GM23248 (cell line): ENCODE measurements at regions of chr3 and their contacts with region 1.

Region 1: DNA sequence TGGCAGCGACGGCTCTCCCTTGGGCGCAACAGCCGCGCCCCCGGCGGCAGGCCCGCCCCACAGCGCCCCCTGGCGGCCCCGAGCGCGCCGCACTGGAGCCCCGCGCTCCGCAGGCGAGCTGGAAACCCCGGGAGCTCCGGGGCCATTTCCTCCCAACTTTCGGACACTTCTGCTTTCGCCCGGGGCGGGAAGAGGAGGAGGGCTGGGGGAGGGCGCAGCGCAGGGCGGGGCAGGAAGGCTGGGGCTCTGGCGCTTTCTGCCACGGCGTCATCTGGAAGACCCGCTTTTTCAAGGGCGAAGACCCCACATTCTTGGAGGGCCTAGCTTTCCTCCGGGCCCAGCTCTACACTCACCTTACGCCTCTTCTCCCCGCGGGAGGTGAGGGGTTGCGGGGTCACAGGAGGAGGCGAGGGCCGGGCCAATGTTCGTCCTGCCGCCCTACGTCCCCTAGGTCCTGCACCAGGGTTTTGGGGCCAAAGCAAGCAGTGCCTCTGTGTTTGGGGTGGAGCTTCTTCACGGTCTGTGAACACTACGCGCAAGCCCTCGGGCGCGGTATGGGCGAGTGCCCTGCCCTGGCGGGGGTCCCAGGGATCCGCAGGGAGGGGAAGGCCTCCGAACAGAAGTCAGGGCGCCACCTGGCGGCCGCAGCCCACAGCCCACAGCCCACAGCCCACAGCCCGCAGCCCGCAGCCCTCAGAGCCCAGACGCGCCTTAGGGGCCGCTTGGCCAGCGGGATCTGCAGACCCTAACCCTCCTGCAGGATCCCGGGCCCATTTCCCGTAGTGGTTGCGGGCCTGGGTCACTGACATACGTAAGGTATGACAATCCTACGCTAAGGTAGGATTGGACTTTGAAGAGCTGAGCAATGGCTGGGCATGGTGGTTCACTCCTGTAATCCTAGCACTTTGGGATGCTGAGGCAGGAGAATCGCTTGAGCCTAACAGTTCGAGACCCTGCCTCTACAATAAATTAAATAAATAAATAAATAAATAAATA is 31.1 kb downstream of the FOXL2 start:
- DNase-seq: peak; percentile 95
- H3K4me3 ChIP-seq: peak overlapping the region; percentile 84
- H3K27ac ChIP-seq: peak overlapping the region; percentile 61
- H3K4me1 ChIP-seq: no peaks in the 10 kb centered on the region
- H3K27me3 ChIP-seq: no peaks in the 10 kb centered on the region

Region 2: DNA sequence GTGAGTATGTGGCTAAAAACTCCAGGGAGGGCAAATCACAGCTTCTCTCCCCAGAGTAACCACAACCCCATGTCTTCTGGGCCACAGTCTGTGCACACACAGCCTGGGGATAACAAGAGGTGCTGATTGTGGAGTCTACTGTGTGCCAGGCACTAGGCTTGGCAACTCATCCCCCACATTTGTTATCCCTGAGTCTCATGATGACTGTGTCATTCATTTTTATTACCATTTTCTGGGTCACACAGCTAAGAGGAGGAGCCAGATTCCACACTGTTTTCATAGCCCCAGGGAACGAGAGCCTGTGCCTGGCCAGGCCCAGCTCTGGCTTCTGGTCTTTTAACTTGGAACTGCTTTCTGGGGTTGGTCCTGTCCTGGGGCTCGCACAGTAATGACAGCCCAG is 446.9 kb before region 1 on chr3:
- in situ Hi-C with region 1: loop called (anchors 25 kb)
- DNase-seq: peak; percentile 56
- H3K4me3 ChIP-seq: no peak overlapping the region
- H3K27ac ChIP-seq: no peak overlapping the region
- H3K4me1 ChIP-seq: no peaks in the 10 kb centered on the region
- H3K27me3 ChIP-seq: no peaks in the 10 kb centered on the region

Region 3: GRCh38 chr3:138594935-138595610 is 320.7 kb before region 1 on chr3:
- in situ Hi-C with region 1: loop called (anchors 5 kb)
- DNase-seq: no peak
- H3K4me3 ChIP-seq: peak overlapping the region; percentile 80; the same call in 1 of the 2 replicates
- H3K27ac ChIP-seq: no peak overlapping the region
- H3K4me1 ChIP-seq: peaks cover 4% of the 10 kb centered on the region
- H3K27me3 ChIP-seq: no peaks in the 10 kb centered on the region

Region 4: GRCh38 chr3:138694287-138695007 is 221.4 kb before region 1 on chr3:
- in situ Hi-C with region 1: loop called (anchors 5 kb)
- DNase-seq: peak; percentile 90
- H3K4me3 ChIP-seq: 0 out of 2 replicates have a peak overlapping the region, but pooled peaks have one; percentile 1
- H3K27ac ChIP-seq: peak overlapping the region; percentile 44
- H3K4me1 ChIP-seq: peaks cover 30% of the 10 kb centered on the region
- H3K27me3 ChIP-seq: no peaks in the 10 kb centered on the region